AG04449 (cell line): ENCODE measurements at regions of chr16 and their contacts with region 1.

Region 1: DNA sequence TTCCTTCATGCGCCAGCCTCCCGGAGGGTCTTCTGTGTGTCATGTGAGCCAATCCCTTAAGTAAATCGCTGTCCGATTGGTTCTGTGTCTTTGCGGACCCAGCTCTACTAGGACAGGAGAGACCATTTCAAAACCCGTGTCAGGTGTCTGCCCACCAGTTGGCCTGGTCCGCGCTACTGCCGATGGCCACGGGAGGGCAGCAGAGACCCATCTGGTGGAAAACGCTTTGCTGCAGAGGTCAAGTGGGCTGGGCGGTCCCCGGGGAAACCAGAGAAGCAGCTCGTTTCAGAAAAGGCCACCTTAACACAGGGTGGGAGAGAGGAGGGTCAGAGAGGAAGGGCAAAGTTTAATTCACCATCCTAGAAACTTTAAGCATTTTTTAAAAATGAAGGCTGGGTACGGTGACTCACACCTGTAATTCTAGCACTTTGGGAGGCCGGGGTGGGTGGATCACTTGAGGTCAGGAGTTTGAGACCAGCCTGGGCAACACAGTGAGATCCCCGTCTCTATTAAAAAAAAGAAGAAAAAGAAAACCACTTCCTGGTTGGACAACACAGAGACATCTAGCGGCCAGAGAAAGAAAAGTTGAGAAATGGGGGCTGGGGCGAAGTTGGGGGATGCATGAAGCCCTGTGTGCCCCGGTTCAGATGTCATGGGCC is 2.8 kb upstream of the CIBAR2 start:
- DNase-seq: no peak
- H3K4me3 ChIP-seq: no peak overlapping the region
- CTCF ChIP-seq: peak; percentile 99

Region 2: DNA sequence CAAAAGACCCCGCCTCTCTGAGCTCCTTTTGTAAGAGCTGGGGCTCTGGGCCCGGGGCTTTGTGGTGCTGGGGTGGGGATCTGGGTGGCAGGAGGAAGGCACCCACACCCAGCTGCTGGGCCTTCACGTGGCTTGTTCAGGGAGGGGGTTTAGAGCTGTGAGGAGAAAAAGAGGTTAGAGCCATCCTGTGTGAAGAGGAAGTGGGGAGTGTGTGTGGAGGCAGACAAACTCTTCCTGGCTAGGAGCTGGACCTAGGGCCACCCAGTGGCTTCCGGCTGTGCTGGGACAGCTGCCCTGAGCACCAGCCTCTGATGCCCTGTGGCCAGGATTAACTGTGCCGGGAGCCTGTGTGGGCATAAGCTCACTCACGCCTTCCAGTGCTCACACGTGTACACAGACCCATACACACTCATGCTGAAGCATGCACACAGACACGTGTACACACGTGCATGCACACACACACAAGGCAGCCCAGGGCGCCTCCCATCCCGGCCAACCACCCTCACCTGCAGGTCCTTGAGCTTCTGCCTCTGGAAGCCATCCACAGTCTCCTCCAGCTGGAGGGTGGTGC is 10.1 kb before region 1 on chr16:
- CTCF ChIA-PET with region 1: interaction called, 18 read pairs
- POLR2A ChIA-PET with region 1: no interaction called
- DNase-seq: no peak
- H3K4me3 ChIP-seq: no peak overlapping the region
- CTCF ChIP-seq: no peak

Region 3: GRCh38 chr16:85172455-85173145 is 57.6 kb after region 1 on chr16:
- CTCF ChIA-PET with region 1: interaction called, 17 read pairs
- POLR2A ChIA-PET with region 1: no interaction called
- DNase-seq: no peak
- H3K4me3 ChIP-seq: peak overlapping the region; percentile 66
- CTCF ChIP-seq: peak; percentile 54

Region 4: GRCh38 chr16:85234310-85235204 is 119.5 kb after region 1 on chr16:
- CTCF ChIA-PET with region 1: interaction called, 11 read pairs
- POLR2A ChIA-PET with region 1: no interaction called
- DNase-seq: no peak
- H3K4me3 ChIP-seq: peak overlapping the region; percentile 46
- CTCF ChIP-seq: no peak

Region 5: DNA sequence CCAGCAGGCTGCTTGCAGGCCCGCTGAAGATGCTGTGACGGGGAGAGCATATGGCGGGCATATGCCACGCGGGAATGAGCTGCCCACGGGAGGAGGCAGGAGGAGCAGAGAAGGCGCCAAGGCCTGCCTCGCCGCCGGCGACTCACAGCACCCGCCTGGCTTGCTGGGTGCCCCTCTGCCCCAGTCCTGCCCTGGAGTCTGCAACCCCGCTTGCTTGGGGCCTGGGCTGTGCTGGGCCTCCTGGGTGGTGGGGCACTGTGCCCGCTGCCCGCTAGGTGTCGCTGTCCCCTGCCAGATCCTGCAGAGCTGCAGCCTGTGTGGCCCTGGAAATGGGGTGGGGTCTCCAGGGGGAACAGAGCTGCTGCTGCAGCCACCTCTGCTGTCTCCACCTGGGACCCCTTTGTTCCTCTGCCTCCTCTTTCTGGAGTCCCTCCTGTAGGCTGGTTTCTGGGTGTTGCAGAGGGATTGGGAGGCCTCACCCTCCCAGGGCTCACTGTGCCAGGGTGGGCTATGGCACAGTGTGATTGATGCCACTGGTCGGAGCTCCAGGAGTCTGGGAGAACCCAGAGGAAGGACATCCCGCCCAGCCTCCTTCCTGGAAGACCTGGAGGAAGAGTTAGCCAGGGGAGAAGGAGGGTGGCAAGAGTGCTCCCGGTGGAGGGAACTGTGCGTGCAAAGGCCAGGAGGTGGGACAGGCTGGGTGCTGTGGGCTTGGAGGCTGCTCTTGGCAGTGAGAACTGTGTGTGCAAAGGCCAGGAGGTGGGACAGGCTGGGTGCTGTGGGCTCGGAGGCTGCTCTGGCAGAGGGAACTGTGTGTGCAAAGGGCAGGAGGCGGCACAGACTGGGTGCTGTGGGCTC is 138.3 kb after region 1 on chr16:
- CTCF ChIA-PET with region 1: interaction called, 52 read pairs
- POLR2A ChIA-PET with region 1: no interaction called
- DNase-seq: no peak
- H3K4me3 ChIP-seq: no peak overlapping the region
- CTCF ChIP-seq: peak; percentile 97

Region 6: GRCh38 chr16:85275533-85276249 is 160.7 kb after region 1 on chr16:
- CTCF ChIA-PET with region 1: interaction called, 19 read pairs
- POLR2A ChIA-PET with region 1: no interaction called
- DNase-seq: no peak
- H3K4me3 ChIP-seq: no peak overlapping the region
- CTCF ChIP-seq: peak; percentile 96

Region 7: GRCh38 chr16:85615852-85616606 is 501.0 kb after region 1 on chr16:
- CTCF ChIA-PET with region 1: interaction called, 17 read pairs
- POLR2A ChIA-PET with region 1: no interaction called
- DNase-seq: no peak
- H3K4me3 ChIP-seq: no peak overlapping the region; the same call in none of the 2 replicates
- CTCF ChIP-seq: peak; percentile 94